HEK293 (cell line): ENCODE measurements at regions of chr21 and their contacts with region 1.

Region 1: DNA sequence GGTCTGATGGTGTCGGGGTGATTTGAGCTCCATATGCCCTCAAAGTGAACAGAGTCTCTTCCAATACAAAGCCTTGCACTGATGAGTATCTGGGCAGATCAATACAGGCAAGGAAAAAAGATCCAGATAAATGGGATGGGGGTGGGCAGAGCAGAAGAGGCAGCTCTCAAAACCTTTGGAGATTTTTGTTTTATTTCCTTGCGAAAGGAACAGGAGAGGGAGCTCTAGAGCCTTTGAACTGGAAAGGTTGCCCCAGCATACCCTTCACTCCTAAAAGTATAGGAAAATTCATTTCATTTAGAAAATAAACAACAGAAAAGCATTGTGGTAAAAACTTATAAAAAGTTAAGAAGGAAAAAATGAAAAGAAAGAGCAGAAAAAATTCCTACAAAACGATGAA is 31.4 kb upstream of the OLIG2 start:
- H3K4me3 ChIP-seq: no peak overlapping the region
- H3K27ac ChIP-seq: no peak overlapping the region
- H3K4me1 ChIP-seq: no peaks in the 10 kb centered on the region
- CTCF ChIP-seq: no peak

Region 2: GRCh38 chr21:33007747-33008146 is 13.4 kb after region 1 on chr21:
- CTCF ChIA-PET with region 1: interaction called, 14 read pairs
- POLR2A ChIA-PET with region 1: no interaction called
- H3K4me3 ChIP-seq: no peak overlapping the region
- H3K27ac ChIP-seq: no peak overlapping the region
- H3K4me1 ChIP-seq: peaks cover 6% of the 10 kb centered on the region; the same call in 1 of the 2 replicates
- CTCF ChIP-seq: no peak

Region 3: GRCh38 chr21:33025489-33026442 is 31.5 kb after region 1 on chr21 and contains the start of gene OLIG2:
- CTCF ChIA-PET with region 1: interaction called, 11 read pairs
- POLR2A ChIA-PET with region 1: interaction called, 3 read pairs
- H3K4me3 ChIP-seq: peak within 1 kb of the TSS; percentile 48
- H3K27ac ChIP-seq: no peak within 1 kb of the TSS; the same call in 1 of the 2 replicates
- H3K4me1 ChIP-seq: no peaks in the 10 kb centered on the region
- CTCF ChIP-seq: no peak

Region 4: DNA sequence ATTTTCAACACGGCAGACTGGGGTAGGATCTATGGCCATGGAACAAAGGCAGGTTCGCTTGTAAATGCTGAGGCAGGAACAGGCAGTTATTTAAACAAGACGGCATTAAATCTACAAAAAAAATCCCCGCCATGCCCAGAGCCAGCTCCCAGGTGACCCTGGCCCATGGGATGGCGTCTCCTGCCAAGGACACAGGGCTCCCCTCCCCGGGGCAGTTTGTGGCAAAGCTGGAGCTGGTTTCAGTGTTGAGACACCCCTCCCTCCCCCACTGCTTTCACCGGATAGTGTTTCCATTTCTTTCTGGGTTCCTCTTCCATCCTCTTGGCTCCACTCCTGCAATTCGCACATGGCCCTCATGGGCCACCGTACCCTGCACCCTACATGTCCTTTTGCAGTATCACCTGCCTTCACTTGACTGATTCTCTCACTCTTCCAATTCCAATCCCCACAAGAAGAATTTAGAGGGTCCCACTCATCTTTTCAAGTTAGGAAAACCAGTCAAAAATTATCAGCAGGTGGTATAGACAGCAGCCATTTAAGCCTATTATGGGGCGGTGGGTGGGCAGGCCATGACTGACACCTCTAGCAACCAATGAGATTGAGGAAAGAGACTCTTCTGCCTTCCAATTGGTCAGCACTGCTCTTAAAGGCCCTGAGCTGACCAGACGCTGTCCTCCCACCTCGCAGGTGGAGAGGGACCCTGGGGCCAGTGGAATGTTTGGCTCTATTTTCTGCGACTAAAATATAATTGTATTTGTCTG is 127.6 kb after region 1 on chr21:
- CTCF ChIA-PET with region 1: interaction called, 127 read pairs
- POLR2A ChIA-PET with region 1: no interaction called
- H3K4me3 ChIP-seq: no peak overlapping the region
- H3K27ac ChIP-seq: no peak overlapping the region
- H3K4me1 ChIP-seq: no peaks in the 10 kb centered on the region; the same call in 1 of the 2 replicates
- CTCF ChIP-seq: no peak

Region 5: GRCh38 chr21:33360881-33361602 is 366.7 kb after region 1 on chr21:
- CTCF ChIA-PET with region 1: no interaction called
- POLR2A ChIA-PET with region 1: no interaction called
- H3K4me3 ChIP-seq: no peak overlapping the region; the same call in 1 of the 2 replicates
- H3K27ac ChIP-seq: no peak overlapping the region
- H3K4me1 ChIP-seq: no peaks in the 10 kb centered on the region
- CTCF ChIP-seq: peak; percentile 86